Activated CD8-positive, alpha-beta T cell treated with anti-CD3 and anti-CD28 coated beads, Interleukin-2, amount 10 ng/mL, durations not matched to agents 7 days and 5 days (primary cell): ENCODE measurements at regions of chr11 and their contacts with region 1.

Region 1: GRCh38 chr11:10792398-10792975 is 16.2 kb downstream of the EIF4G2 start:
- DNase-seq: peak; percentile 88
- ATAC-seq: peak; percentile 87
- H3K4me3 Mint-ChIP-seq: no peak overlapping the region
- H3K27ac Mint-ChIP-seq: no peak overlapping the region
- H3K4me1 Mint-ChIP-seq: peaks cover 36% of the 10 kb centered on the region
- H3K27me3 Mint-ChIP-seq: peaks cover 16% of the 10 kb centered on the region

Region 2: GRCh38 chr11:10770626-10771254 is 21.7 kb before region 1 on chr11:
- CTCF ChIA-PET with region 1: interaction called, 78 read pairs
- POLR2A ChIA-PET with region 1: no interaction called
- DNase-seq: peak; percentile 54
- ATAC-seq: peak; percentile 53
- H3K4me3 Mint-ChIP-seq: no peak overlapping the region
- H3K27ac Mint-ChIP-seq: no peak overlapping the region
- H3K4me1 Mint-ChIP-seq: no peaks in the 10 kb centered on the region
- H3K27me3 Mint-ChIP-seq: no peaks in the 10 kb centered on the region

Region 3: GRCh38 chr11:10808553-10809372 is 16.3 kb after region 1 on chr11 and contains the start of gene EIF4G2:
- CTCF ChIA-PET with region 1: interaction called, 50 read pairs
- POLR2A ChIA-PET with region 1: interaction called, 56 read pairs
- DNase-seq: peak; percentile 98
- ATAC-seq: peak; percentile 94
- H3K4me3 Mint-ChIP-seq: peak within 1 kb of the TSS; percentile 86
- H3K27ac Mint-ChIP-seq: peak within 1 kb of the TSS; percentile 98
- H3K4me1 Mint-ChIP-seq: peaks cover 47% of the 10 kb centered on the region
- H3K27me3 Mint-ChIP-seq: no peaks in the 10 kb centered on the region
- total RNA-seq, gene EIF4G2: 667 to 682 TPM

Region 4: DNA sequence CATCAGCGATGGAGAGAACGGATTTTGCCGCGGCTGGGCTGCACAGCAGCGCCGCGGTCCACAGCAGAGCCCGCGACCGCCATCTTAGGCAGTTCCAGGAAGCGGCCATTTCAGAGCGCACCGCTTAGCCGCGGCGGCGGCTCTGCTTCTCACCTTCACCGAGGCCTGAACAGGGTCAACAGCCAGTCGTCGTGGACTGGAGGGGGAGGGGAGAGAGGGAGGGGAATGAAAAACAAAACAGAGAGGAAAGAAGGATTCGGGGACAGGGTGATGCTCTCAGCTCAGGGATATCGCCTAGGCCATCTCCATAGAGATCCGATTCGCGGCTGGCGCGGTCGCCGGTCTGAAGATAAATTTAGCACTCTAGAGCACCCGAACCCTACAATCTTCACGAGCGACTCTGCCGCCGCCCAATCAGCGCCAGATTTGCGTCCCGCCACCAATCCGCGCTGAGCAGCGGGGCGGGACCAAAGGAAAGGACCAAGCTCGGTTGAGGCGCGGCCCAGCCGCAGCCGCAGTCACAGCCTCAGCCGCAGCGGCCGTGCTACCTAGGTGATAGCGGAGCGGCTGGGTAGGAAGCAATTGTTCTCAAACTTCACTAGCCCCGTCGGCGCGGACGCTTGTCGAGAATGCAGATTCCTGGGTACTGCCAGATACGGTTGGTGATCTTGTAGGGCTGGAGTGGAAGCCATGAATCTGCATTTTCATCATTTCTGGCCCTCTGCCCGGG is 65.4 kb after region 1 on chr11 and contains the start of gene ZBED5:
- CTCF ChIA-PET with region 1: interaction called, 21 read pairs
- POLR2A ChIA-PET with region 1: interaction called, 11 read pairs
- DNase-seq: peak; percentile 96
- ATAC-seq: peak; percentile 92
- H3K4me3 Mint-ChIP-seq: peak within 1 kb of the TSS; percentile 99
- H3K27ac Mint-ChIP-seq: peak within 1 kb of the TSS; percentile 99
- H3K4me1 Mint-ChIP-seq: peaks cover 38% of the 10 kb centered on the region
- H3K27me3 Mint-ChIP-seq: no peaks in the 10 kb centered on the region
- total RNA-seq, gene ZBED5: 33.7 to 35.6 TPM

Region 5: DNA sequence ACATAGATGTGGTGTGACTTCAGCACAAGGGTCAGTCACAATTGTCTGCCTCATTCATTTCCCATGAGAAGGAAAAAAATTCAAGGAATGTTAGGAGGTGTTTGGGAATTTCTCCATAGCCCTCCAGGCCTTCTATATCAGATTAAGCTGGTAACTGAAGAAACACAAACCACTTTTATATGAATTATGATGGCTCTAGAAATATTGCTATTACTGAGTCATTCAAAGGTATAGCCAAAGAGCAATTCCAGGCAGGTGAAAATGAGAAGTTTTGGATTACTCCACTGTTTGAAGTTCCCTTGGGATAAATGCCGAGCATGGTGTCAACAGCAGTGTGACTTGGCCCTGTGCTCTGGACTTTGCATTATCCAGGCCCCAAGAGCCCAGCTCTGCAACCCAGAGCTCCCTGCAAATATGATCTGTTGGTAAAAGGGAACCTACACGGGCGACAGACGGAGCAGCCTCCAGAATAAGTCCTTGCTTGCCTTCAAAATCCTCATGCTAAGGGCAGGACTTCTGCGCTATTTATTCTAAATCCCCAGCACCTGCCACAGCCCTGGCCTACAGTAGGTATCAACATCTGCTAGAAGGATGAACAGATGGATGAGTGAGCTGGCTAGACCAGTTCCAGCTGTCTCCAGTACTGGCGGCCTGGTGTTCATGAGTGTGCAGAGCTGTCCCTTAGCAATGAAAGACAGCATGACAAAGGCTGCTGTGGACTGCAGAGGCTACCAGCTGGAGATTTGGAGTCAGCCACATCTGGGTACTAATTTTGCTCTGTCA is 132.8 kb after region 1 on chr11:
- CTCF ChIA-PET with region 1: interaction called, 20 read pairs
- POLR2A ChIA-PET with region 1: no interaction called
- DNase-seq: no peak
- ATAC-seq: no peak
- H3K4me3 Mint-ChIP-seq: no peak overlapping the region
- H3K27ac Mint-ChIP-seq: no peak overlapping the region
- H3K4me1 Mint-ChIP-seq: peaks cover 3% of the 10 kb centered on the region
- H3K27me3 Mint-ChIP-seq: peaks cover 22% of the 10 kb centered on the region

Region 6: DNA sequence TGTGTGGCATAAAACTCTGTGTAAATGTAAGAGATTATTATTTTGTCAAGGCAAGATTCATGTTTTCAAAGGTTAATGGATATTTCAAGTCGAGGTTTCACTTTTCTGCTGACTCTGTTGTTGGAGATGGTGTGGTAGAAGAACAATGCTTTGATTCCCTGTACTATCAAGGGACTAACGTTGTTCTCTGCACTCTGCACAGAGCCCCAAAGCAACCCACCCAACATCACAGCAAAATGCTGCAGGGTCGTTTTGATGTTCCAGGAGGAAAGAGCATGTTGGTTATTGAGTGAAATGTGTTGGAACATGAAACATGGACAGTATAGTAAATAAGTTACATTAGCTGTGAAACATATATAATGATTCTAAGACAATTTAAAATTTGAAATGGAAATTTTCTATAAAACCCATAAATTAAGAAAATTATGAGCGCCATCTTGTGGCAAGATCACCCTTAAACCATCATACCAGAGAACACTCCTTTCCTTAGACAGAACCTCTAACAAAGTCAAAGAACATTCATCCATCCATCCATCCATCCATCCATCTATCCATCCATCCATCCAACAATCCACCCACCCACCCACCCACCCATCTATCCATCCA is 229.7 kb after region 1 on chr11:
- CTCF ChIA-PET with region 1: interaction called, 41 read pairs
- POLR2A ChIA-PET with region 1: interaction called, 3 read pairs
- DNase-seq: peak; percentile 43
- ATAC-seq: no peak
- H3K4me3 Mint-ChIP-seq: no peak overlapping the region
- H3K27ac Mint-ChIP-seq: no peak overlapping the region
- H3K4me1 Mint-ChIP-seq: no peaks in the 10 kb centered on the region
- H3K27me3 Mint-ChIP-seq: peaks cover 18% of the 10 kb centered on the region